MCF 10A (cell line): ENCODE measurements at regions of chr12 and their contacts with region 1.

Region 1: GRCh38 chr12:54201001-54201794 is 12.4 kb upstream of the SMUG1 start:
- DNase-seq: peak; percentile 75
- H3K4me3 Mint-ChIP-seq: no peak overlapping the region
- H3K27ac Mint-ChIP-seq: no peak overlapping the region
- H3K4me1 Mint-ChIP-seq: peaks cover 17% of the 10 kb centered on the region
- H3K27me3 Mint-ChIP-seq: peaks cover 11% of the 10 kb centered on the region
- CTCF ChIP-seq: peak; percentile 92

Region 2: DNA sequence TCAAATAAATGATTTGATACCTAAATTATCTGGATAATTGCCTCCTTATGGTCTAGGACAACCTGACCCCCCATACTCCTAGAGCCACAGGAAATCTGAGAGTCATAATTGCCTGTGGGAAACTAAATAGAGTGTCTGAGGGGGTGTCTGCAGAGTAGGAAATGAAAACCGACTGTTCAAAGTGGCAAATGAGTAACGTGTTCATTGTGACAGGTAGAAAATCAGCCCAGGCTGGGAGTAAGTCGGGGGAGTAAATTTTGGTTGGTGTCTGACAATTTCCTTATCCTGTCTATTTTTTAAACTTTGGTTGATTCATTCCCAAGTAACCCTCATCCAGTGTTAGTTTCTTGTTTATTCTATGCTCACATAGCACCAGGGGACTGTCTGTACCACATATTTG is 314.2 kb before region 1 on chr12:
- CTCF ChIA-PET with region 1: no interaction called
- POLR2A ChIA-PET with region 1: no interaction called
- intact Hi-C with region 1: no loop called
- DNase-seq: no peak
- H3K4me3 Mint-ChIP-seq: no peak overlapping the region
- H3K27ac Mint-ChIP-seq: no peak overlapping the region
- H3K4me1 Mint-ChIP-seq: no peaks in the 10 kb centered on the region
- H3K27me3 Mint-ChIP-seq: peaks cover 38% of the 10 kb centered on the region
- CTCF ChIP-seq: no peak

Region 3: GRCh38 chr12:53991077-53991460 is 210.1 kb before region 1 on chr12:
- CTCF ChIA-PET with region 1: interaction called, 12 read pairs
- POLR2A ChIA-PET with region 1: no interaction called
- intact Hi-C with region 1: no loop called
- DNase-seq: no peak
- H3K4me3 Mint-ChIP-seq: no peak overlapping the region
- H3K27ac Mint-ChIP-seq: no peak overlapping the region
- H3K4me1 Mint-ChIP-seq: peaks cover 24% of the 10 kb centered on the region
- H3K27me3 Mint-ChIP-seq: peaks cover 7% of the 10 kb centered on the region
- CTCF ChIP-seq: no peak

Region 4: DNA sequence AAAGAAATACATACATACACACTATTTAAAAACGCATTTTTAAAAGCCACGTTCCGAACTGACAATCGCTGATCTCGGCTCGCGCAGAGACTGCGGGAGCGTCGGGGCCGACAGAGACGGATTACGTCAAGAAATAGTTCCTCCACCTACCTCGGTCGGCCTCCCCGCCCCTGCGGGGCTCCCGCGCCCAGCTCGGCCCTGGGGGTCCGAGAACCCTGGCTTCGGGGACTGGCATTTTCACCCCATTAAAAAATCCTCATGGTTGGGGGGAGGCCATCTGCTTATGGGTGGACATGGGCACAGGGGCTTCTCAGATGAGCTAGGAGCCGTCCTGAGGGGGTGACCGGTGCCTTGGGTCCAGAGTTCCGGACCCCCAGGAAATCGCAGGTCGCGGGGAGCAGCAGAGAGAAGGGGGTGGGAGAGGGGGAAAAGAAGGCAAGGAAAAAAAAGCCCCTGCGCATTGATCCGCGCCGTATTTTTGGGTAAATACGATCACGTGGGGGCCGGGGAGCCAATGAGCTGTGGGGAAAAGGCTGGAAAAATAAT is 201.6 kb before region 1 on chr12:
- CTCF ChIA-PET with region 1: interaction called, 200 read pairs
- POLR2A ChIA-PET with region 1: interaction called, 7 read pairs
- intact Hi-C with region 1: no loop called
- DNase-seq: peak; percentile 90
- H3K4me3 Mint-ChIP-seq: peak overlapping the region; percentile 89
- H3K27ac Mint-ChIP-seq: peak overlapping the region; percentile 97
- H3K4me1 Mint-ChIP-seq: peaks cover 12% of the 10 kb centered on the region
- H3K27me3 Mint-ChIP-seq: no peaks in the 10 kb centered on the region
- CTCF ChIP-seq: no peak

Region 5: DNA sequence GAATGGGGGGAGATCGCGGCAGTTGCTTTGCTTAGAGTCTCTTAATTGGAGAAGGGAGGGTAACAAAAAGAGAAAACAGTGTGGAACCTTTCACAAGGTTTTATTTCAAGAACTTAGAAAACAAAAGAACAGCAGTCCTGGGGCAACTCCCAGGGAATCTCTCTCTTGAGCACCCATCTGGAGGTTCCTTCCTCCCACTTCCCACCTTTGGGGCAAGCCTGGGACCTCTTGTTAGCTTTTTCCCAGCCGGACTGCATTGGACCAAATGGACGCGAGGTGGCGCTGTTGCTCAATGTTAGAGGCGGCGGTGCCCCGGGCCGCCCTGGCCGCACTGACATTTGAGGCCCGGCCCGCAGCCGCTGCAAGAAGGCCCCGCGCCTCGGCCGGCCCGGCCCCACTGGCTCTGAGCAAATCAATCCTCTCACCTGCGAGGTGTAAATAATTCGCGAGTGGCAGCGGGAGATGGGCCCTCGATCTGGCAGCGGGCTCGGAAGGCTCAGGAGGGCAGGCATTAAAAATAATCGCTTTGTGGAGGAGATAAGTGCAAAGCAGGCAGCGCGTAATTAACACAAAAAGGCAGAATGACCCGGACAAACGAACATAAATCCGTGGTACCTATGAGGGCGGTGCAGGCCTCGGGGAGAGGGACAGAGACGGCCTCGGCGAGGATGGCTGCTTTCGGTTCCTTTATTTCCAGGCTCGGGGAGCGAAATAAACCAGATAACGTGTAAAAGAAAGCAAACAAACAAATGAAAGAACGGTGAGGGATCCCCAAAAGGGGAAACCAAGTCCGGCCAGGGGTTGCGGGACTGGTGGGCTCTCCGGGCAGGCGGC is 195.1 kb before region 1 on chr12:
- CTCF ChIA-PET with region 1: interaction called, 200 read pairs
- POLR2A ChIA-PET with region 1: interaction called, 7 read pairs
- intact Hi-C with region 1: loop called (anchors 1 kb)
- DNase-seq: peak; percentile 88
- H3K4me3 Mint-ChIP-seq: no peak overlapping the region
- H3K27ac Mint-ChIP-seq: no peak overlapping the region
- H3K4me1 Mint-ChIP-seq: peaks cover 25% of the 10 kb centered on the region
- H3K27me3 Mint-ChIP-seq: no peaks in the 10 kb centered on the region
- CTCF ChIP-seq: peak; percentile 96

Region 6: GRCh38 chr12:54017878-54018467 is 183.2 kb before region 1 on chr12:
- CTCF ChIA-PET with region 1: interaction called, 38 read pairs
- POLR2A ChIA-PET with region 1: interaction called, 6 read pairs
- intact Hi-C with region 1: no loop called
- DNase-seq: peak; percentile 96
- H3K4me3 Mint-ChIP-seq: peak overlapping the region; percentile 98
- H3K27ac Mint-ChIP-seq: peak overlapping the region; percentile 98
- H3K4me1 Mint-ChIP-seq: peaks cover 23% of the 10 kb centered on the region
- H3K27me3 Mint-ChIP-seq: no peaks in the 10 kb centered on the region
- CTCF ChIP-seq: no peak

Region 7: GRCh38 chr12:54039417-54040147 is 161.6 kb before region 1 on chr12:
- CTCF ChIA-PET with region 1: interaction called, 16 read pairs
- POLR2A ChIA-PET with region 1: no interaction called
- intact Hi-C with region 1: no loop called
- DNase-seq: no peak
- H3K4me3 Mint-ChIP-seq: no peak overlapping the region
- H3K27ac Mint-ChIP-seq: no peak overlapping the region
- H3K4me1 Mint-ChIP-seq: peaks cover 6% of the 10 kb centered on the region
- H3K27me3 Mint-ChIP-seq: no peaks in the 10 kb centered on the region
- CTCF ChIP-seq: no peak

Region 8: GRCh38 chr12:54214553-54215406 is 13.6 kb after region 1 on chr12:
- CTCF ChIA-PET with region 1: interaction called, 111 read pairs
- POLR2A ChIA-PET with region 1: interaction called, 4 read pairs
- intact Hi-C with region 1: no loop called
- DNase-seq: peak; percentile 93
- H3K4me3 Mint-ChIP-seq: peak overlapping the region; percentile 26
- H3K27ac Mint-ChIP-seq: no peak overlapping the region
- H3K4me1 Mint-ChIP-seq: peaks cover 12% of the 10 kb centered on the region
- H3K27me3 Mint-ChIP-seq: no peaks in the 10 kb centered on the region
- CTCF ChIP-seq: peak; percentile 99

Region 9: DNA sequence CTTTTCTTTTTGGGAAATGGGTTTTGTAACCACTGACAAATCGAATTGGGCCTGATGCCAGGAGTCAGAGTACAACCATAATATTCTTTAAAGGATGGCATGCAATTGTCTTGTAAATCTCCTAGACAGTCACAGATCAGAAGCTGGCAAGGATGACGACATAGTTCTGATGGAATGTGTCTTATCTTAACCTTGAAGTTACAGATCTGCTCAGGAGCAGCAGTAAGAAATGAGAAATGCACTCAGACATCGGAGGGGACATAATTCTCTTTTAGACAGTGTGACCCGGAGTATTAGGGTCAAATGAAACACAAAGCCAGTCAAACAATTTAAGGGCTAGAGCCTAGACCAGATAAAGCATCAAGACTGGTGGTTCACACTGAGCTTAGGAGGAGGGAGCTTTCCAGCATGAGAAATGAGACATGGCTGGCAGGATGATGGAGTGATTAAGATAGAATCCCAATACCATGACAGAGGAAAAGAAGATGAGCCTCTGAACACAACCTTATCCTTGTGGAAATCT is 61.3 kb after region 1 on chr12:
- CTCF ChIA-PET with region 1: no interaction called
- POLR2A ChIA-PET with region 1: no interaction called
- intact Hi-C with region 1: no loop called
- DNase-seq: peak; percentile 81
- H3K4me3 Mint-ChIP-seq: peak overlapping the region; percentile 29
- H3K27ac Mint-ChIP-seq: peak overlapping the region; percentile 49
- H3K4me1 Mint-ChIP-seq: peaks cover 14% of the 10 kb centered on the region
- H3K27me3 Mint-ChIP-seq: no peaks in the 10 kb centered on the region
- CTCF ChIP-seq: no peak